Ovary (tissue), 10 donors: ENCODE measurements at regions of chr18 and their contacts with region 1.

Region 1: GRCh38 chr18:33934258-33934657 is 290.5 kb downstream of the NOL4 start:
- DNase-seq: no peak
- H3K4me3 ChIP-seq: no peak overlapping the region
- H3K27ac ChIP-seq: no peak overlapping the region
- H3K4me1 ChIP-seq: no peaks in the 10 kb centered on the region
- H3K27me3 ChIP-seq: no peaks in the 10 kb centered on the region
- CTCF ChIP-seq: no peak
- EP300 ChIP-seq: no peak
- POLR2A ChIP-seq: no peak

Region 2: DNA sequence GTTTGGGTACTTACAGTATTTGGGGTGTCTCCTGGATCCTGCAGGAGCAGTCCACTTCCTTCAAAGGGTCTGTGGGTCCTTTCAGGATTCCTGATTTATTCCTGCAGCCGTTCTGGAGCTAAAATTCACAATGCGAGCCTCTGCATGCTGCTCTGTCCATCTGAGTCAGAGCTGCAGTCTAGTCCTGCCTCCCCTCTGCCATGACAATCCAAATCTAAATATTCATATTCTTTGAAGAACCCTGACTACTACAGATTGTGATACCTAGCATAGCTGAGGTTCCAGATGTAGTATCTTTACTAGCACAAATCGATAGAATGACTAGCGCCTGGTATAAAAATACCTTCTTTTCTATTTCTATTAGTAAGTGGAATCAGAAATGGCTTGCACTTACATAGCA is 1432.2 kb before region 1 on chr18:
- intact Hi-C with region 1: loop called in 1 of 4 experiments (anchors 5 kb)
- DNase-seq: no peak
- H3K4me3 ChIP-seq: no peak overlapping the region
- H3K27ac ChIP-seq: no peak overlapping the region
- H3K4me1 ChIP-seq: no peaks in the 10 kb centered on the region
- H3K27me3 ChIP-seq: no peaks in the 10 kb centered on the region
- CTCF ChIP-seq: no peak
- EP300 ChIP-seq: no peak
- POLR2A ChIP-seq: no peak